ENCODE measurements at regions of chr3 and their contacts with region 1.

Region 1: GRCh38 chr3:58188173-58188564 is 22.6 kb downstream of the DNASE1L3 start:
- DNase-seq: no peak
- ATAC-seq: no peak
- H3K4me3 ChIP-seq: no peak overlapping the region
- H3K4me3 Mint-ChIP-seq: no peak overlapping the region
- H3K27ac ChIP-seq: no peak overlapping the region
- H3K27ac Mint-ChIP-seq: no peak overlapping the region
- H3K4me1 ChIP-seq: no peaks in the 10 kb centered on the region
- H3K4me1 Mint-ChIP-seq: no peaks in the 10 kb centered on the region
- H3K27me3 ChIP-seq: no peaks in the 10 kb centered on the region
- H3K27me3 Mint-ChIP-seq: no peaks in the 10 kb centered on the region
- CTCF ChIP-seq: no peak

Region 2: GRCh38 chr3:58101499-58102389 is 86.4 kb before region 1 on chr3:
- CTCF ChIA-PET with region 1: no interaction called
- POLR2A ChIA-PET with region 1: no interaction called
- intact Hi-C with region 1: no loop called
- DNase-seq: no peak
- ATAC-seq: no peak
- H3K4me3 ChIP-seq: no peak overlapping the region
- H3K4me3 Mint-ChIP-seq: no peak overlapping the region
- H3K27ac ChIP-seq: no peak overlapping the region
- H3K27ac Mint-ChIP-seq: no peak overlapping the region
- H3K4me1 ChIP-seq: peaks cover 33% of the 10 kb centered on the region
- H3K4me1 Mint-ChIP-seq: peaks cover 34% of the 10 kb centered on the region
- H3K27me3 ChIP-seq: no peaks in the 10 kb centered on the region
- H3K27me3 Mint-ChIP-seq: no peaks in the 10 kb centered on the region
- CTCF ChIP-seq: no peak

Region 3: DNA sequence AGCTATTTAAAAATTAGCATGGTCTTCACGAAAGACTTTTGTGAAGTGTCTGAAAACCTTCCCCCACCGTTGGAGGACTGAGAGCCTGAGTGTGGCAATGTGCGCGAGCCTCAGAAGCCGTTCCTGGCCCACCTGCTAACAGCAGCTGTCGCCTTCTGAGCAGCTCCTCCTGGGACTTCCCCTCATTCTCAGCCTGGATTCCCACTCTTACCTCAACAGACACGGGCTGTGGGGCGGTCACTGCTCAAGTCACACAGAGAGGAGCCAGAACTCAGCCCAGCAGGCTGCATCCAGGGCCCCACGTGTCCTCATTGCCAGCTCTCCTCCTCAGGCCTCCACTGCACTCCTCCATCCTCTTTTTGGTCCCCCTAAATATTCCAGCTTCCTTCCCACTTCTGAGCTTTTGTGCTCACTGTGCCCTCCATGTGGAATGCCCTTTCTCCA is 14.8 kb after region 1 on chr3:
- CTCF ChIA-PET with region 1: interaction called, 10 read pairs
- POLR2A ChIA-PET with region 1: no interaction called
- intact Hi-C with region 1: no loop called
- DNase-seq: no peak
- ATAC-seq: no peak
- H3K4me3 ChIP-seq: no peak overlapping the region
- H3K4me3 Mint-ChIP-seq: no peak overlapping the region
- H3K27ac ChIP-seq: no peak overlapping the region
- H3K27ac Mint-ChIP-seq: no peak overlapping the region
- H3K4me1 ChIP-seq: no peaks in the 10 kb centered on the region
- H3K4me1 Mint-ChIP-seq: peaks cover 7% of the 10 kb centered on the region
- H3K27me3 ChIP-seq: no peaks in the 10 kb centered on the region
- H3K27me3 Mint-ChIP-seq: peaks cover 11% of the 10 kb centered on the region
- CTCF ChIP-seq: no peak

Region 4: GRCh38 chr3:58217209-58217811 is 29.1 kb after region 1 on chr3:
- CTCF ChIA-PET with region 1: interaction called, 103 read pairs
- POLR2A ChIA-PET with region 1: no interaction called
- intact Hi-C with region 1: loop called (anchors 1 kb)
- DNase-seq: peak; percentile 16 to 80 (median 55)
- ATAC-seq: peak; percentile 90
- H3K4me3 ChIP-seq: no peak overlapping the region
- H3K4me3 Mint-ChIP-seq: peak overlapping the region; percentile 16
- H3K27ac ChIP-seq: no peak overlapping the region
- H3K27ac Mint-ChIP-seq: no peak overlapping the region
- H3K4me1 ChIP-seq: peaks cover 4% of the 10 kb centered on the region
- H3K4me1 Mint-ChIP-seq: peaks cover 7% of the 10 kb centered on the region
- H3K27me3 ChIP-seq: no peaks in the 10 kb centered on the region
- H3K27me3 Mint-ChIP-seq: no peaks in the 10 kb centered on the region
- CTCF ChIP-seq: peak; percentile 78

Region 5: DNA sequence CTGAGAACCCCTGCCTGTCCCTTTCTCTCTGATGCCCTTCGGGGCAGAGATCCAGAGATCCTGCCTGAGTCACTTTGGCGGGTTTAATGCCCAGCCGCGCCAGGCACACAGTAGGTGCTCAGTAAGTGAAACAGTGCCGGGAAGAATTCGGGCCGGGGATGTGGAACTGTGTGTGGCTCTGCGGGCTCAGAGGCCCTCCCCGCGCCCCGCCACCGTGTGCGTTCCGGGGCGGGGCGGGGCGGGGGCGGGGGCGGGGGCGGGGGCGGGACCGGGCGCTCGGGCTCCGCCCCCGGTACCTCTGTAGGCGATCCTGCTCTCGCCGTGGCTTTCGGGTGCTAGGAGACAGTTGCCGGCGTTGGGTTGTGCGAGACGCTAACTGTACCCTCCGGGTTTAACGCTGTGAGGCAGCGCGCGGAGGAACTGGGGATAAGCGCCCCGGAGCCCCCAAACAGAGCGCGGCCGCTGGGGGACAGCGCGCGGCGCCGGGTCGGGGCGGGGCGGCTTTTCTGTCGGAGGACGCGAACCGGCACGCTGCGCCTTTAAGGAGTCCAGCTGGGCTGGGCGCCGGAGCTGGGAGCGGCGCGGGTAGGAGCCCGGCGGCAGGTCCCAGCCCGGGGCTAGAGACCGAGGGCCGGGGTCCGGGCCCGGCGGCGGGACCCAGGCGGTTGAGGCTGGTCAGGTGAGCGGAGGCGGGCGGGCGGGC is 49.2 kb after region 1 on chr3 and contains the start of gene ABHD6:
- CTCF ChIA-PET with region 1: no interaction called
- POLR2A ChIA-PET with region 1: no interaction called
- intact Hi-C with region 1: no loop called
- DNase-seq: peak; percentile 73 to 92 (median 83)
- ATAC-seq: peak; percentile 84
- H3K4me3 ChIP-seq: peak within 1 kb of the TSS; percentile 57 to 79
- H3K4me3 Mint-ChIP-seq: peak within 1 kb of the TSS; percentile 92
- H3K27ac ChIP-seq: peak within 1 kb of the TSS; percentile 38 to 49
- H3K27ac Mint-ChIP-seq: peak within 1 kb of the TSS; percentile 87
- H3K4me1 ChIP-seq: peaks cover 7% of the 10 kb centered on the region
- H3K4me1 Mint-ChIP-seq: peaks cover 17% of the 10 kb centered on the region
- H3K27me3 ChIP-seq: no peaks in the 10 kb centered on the region
- H3K27me3 Mint-ChIP-seq: peaks cover 14% of the 10 kb centered on the region
- CTCF ChIP-seq: no peak
- total RNA-seq, gene ABHD6: 1.9 to 2.1 TPM

Region 6: GRCh38 chr3:58299839-58300516 is 111.8 kb after region 1 on chr3:
- CTCF ChIA-PET with region 1: interaction called, 6 read pairs
- POLR2A ChIA-PET with region 1: no interaction called
- intact Hi-C with region 1: loop called in 1 of 2 experiments (anchors 1 kb)
- DNase-seq: peak in 2 of 9 experiments; percentile 23 to 29
- ATAC-seq: no peak
- H3K4me3 ChIP-seq: no peak overlapping the region
- H3K4me3 Mint-ChIP-seq: no peak overlapping the region
- H3K27ac ChIP-seq: no peak overlapping the region
- H3K27ac Mint-ChIP-seq: no peak overlapping the region
- H3K4me1 ChIP-seq: no peaks in the 10 kb centered on the region
- H3K4me1 Mint-ChIP-seq: peaks cover under 1% of the 10 kb centered on the region
- H3K27me3 ChIP-seq: no peaks in the 10 kb centered on the region
- H3K27me3 Mint-ChIP-seq: peaks cover 24% of the 10 kb centered on the region
- CTCF ChIP-seq: peak; percentile 13

Region 7: GRCh38 chr3:58414538-58415197 is 226.5 kb after region 1 on chr3:
- CTCF ChIA-PET with region 1: no interaction called
- POLR2A ChIA-PET with region 1: no interaction called
- intact Hi-C with region 1: loop called in 1 of 2 experiments (anchors 2 kb)
- DNase-seq: peak in 6 of 9 experiments; percentile 23 to 72 (median 42)
- ATAC-seq: peak; percentile 91
- H3K4me3 ChIP-seq: no peak overlapping the region
- H3K4me3 Mint-ChIP-seq: no peak overlapping the region
- H3K27ac ChIP-seq: no peak overlapping the region
- H3K27ac Mint-ChIP-seq: no peak overlapping the region
- H3K4me1 ChIP-seq: no peaks in the 10 kb centered on the region
- H3K4me1 Mint-ChIP-seq: no peaks in the 10 kb centered on the region
- H3K27me3 ChIP-seq: no peaks in the 10 kb centered on the region
- H3K27me3 Mint-ChIP-seq: no peaks in the 10 kb centered on the region
- CTCF ChIP-seq: peak; percentile 60

Region 8: GRCh38 chr3:58474348-58474911 is 286.3 kb after region 1 on chr3:
- CTCF ChIA-PET with region 1: no interaction called
- POLR2A ChIA-PET with region 1: no interaction called
- intact Hi-C with region 1: no loop called
- DNase-seq: no peak
- ATAC-seq: no peak
- H3K4me3 ChIP-seq: no peak overlapping the region
- H3K4me3 Mint-ChIP-seq: no peak overlapping the region
- H3K27ac ChIP-seq: no peak overlapping the region
- H3K27ac Mint-ChIP-seq: peak overlapping the region; percentile 12
- H3K4me1 ChIP-seq: peaks cover 18% of the 10 kb centered on the region
- H3K4me1 Mint-ChIP-seq: peaks cover 24% of the 10 kb centered on the region
- H3K27me3 ChIP-seq: no peaks in the 10 kb centered on the region
- H3K27me3 Mint-ChIP-seq: no peaks in the 10 kb centered on the region
- CTCF ChIP-seq: no peak

Region 9: GRCh38 chr3:59496250-59496649 is 1308.1 kb after region 1 on chr3:
- CTCF ChIA-PET with region 1: no interaction called
- POLR2A ChIA-PET with region 1: no interaction called
- intact Hi-C with region 1: no loop called
- DNase-seq: no peak
- ATAC-seq: no peak
- H3K4me3 ChIP-seq: no peak overlapping the region
- H3K4me3 Mint-ChIP-seq: no peak overlapping the region
- H3K27ac ChIP-seq: no peak overlapping the region
- H3K27ac Mint-ChIP-seq: no peak overlapping the region
- H3K4me1 ChIP-seq: no peaks in the 10 kb centered on the region
- H3K4me1 Mint-ChIP-seq: peaks cover 11% of the 10 kb centered on the region
- H3K27me3 ChIP-seq: no peaks in the 10 kb centered on the region
- H3K27me3 Mint-ChIP-seq: no peaks in the 10 kb centered on the region
- CTCF ChIP-seq: no peak

Measured in CD8-positive, alpha-beta T cell (primary cell).